Naive thymus-derived CD8-positive, alpha-beta T cell (primary cell): ENCODE measurements at regions of chr17 and their contacts with region 1.

Region 1: DNA sequence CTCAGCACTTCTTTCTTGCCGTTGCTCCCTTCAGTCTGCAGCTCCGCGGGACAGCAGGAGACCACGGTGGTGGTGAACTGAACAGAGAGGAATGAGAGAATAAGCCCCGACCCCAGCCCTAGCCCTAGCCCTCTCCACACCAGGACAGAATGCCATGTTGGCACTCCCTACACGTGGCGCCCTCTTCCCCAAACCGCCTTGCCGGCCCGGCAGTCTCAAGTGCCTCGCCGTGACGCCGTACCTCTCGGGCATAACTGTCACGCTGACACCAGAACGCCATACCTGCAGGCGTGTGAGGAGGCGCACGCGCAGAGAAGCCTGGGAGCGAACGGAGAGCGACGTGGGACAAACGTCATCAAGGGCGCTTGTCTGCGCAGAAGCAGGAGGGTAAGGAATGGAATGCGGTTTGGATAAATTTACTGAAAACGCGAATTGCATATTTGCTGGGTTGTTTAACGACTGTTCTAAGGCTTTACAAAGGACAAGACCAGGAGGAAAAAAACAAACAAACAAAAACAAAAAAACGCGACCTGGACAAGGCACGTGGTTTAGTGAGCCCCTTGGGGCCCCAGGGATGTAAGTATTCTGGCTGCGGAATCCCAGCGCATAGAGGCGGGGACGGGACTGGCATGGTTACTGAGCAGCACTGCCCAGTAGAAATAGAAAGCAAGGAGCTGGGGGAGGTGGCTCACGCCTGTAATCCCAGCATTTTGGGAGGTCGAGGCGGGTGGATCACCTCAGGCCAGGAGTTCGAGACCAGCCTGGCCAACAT is at the start of gene AARSD1:
- DNase-seq: peak; percentile 79 to 95 (median 88)
- ATAC-seq: peak; percentile 97 to 98
- H3K4me3 Mint-ChIP-seq: peak within 1 kb of the TSS; percentile 88 to 99 (median 96)
- H3K27ac Mint-ChIP-seq: peak within 1 kb of the TSS; percentile 91 to 99 (median 96)
- H3K4me1 Mint-ChIP-seq: peaks cover 8 to 22% (median 20%) of the 10 kb centered on the region in 4 donors
- H3K27me3 Mint-ChIP-seq: peaks cover 0 to 2% (median 0%) of the 10 kb centered on the region in 5 donors
- polyA plus RNA-seq, gene AARSD1: 40.5 to 56.2 (median 45.2) TPM

Region 2: GRCh38 chr17:43042025-43042628 is 77.8 kb after region 1 on chr17:
- POLR2A ChIA-PET with region 1: no interaction called
- DNase-seq: no peak
- ATAC-seq: no peak
- H3K4me3 Mint-ChIP-seq: no peak overlapping the region
- H3K27ac Mint-ChIP-seq: no peak overlapping the region
- H3K4me1 Mint-ChIP-seq: no peaks in the 10 kb centered on the region
- H3K27me3 Mint-ChIP-seq: no peaks in the 10 kb centered on the region

Region 3: GRCh38 chr17:43338886-43339516 is 374.7 kb after region 1 on chr17:
- POLR2A ChIA-PET with region 1: interaction called, 11 read pairs
- DNase-seq: peak; percentile 33 to 83 (median 52)
- ATAC-seq: no peak
- H3K4me3 Mint-ChIP-seq: no peak overlapping the region
- H3K27ac Mint-ChIP-seq: peak overlapping the region in 2 of 10 donors; percentile 18 to 59
- H3K4me1 Mint-ChIP-seq: peaks cover 7 to 15% (median 12%) of the 10 kb centered on the region in 4 donors
- H3K27me3 Mint-ChIP-seq: no peaks in the 10 kb centered on the region